ENCODE measurements at regions of chr14 and their contacts with region 1.

Region 1: DNA sequence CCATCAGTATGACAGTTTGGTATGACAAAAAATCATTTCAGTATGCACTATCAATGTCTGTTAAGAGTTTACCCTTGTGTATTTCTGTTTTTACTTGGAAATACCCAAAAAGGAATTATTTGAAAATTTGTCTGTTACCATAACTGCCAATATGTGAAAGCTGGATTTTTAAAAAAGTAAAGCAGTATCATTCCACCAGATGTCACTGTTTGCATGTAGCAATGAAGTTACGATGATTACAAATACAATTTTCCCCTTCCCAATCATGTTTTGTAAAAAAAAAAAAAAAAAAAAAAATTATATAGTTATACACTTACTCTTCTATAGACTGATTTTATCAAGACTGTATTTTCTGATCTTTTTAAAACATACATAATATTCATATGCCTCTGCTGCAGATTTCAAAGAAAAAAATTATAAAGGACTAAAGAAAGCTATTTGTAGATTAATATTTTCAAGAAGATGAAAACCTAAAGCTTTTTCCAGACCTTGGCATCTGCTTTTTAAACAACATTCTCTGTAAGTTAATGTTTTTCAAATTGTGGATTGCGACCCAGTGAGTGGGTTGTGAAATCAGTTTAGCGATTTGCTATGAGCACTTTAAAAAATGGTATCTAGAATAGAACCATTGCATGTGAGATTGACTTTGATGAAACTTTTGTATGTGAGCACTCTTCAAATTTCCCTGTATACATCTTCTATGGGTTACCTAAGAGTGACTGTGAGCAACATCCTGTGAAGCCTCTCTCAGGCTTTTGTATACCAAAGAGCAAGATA is 114.2 kb downstream of the TTC6 start:
- DNase-seq: peak; percentile 16
- H3K4me3 ChIP-seq: no peak overlapping the region
- H3K27ac ChIP-seq: no peak overlapping the region
- H3K4me1 ChIP-seq: no peaks in the 10 kb centered on the region
- H3K27me3 ChIP-seq: peaks cover 6 to 11% of the 10 kb centered on the region in 2 experiments
- CTCF ChIP-seq: peak in 1 of 2 donors; percentile 24
- POLR2A ChIP-seq: no peak

Region 2: DNA sequence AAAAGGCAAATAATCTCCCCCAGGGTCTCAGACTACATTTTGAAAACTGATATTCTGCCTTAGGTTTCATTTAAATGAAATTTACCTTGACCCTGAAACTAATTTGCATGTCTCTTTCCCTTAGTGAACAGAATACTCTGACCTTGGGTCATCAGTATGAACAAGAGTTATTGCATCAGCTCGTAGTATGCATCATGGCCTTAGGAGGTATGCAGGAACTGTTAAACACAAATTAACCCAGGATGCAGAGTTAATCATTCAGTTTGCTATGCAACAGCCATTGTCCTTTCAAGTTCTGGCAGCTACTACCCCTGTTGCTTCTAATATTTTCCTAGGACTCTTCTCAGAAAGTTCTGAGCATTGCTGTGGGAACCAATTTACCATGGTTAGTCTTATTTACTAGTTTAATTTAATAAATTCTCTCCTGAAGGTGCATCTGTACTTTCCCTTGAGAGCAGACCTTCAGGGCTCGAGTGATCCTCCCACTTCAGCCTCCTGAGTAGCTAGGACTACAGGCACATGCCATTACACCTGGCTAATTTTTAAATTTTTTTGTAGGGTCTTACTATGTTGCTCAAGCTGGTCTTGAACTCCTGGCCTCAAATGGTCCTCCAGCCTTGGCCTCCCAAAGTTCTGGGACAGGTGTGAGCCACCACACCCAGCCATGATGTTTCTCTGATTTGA is 12.5 kb after region 1 on chr14:
- CTCF ChIA-PET with region 1: interaction called, 10 read pairs
- POLR2A ChIA-PET with region 1: no interaction called
- dilution Hi-C with region 1: no loop called
- intact Hi-C with region 1: no loop called
- DNase-seq: no peak
- H3K4me3 ChIP-seq: no peak overlapping the region
- H3K27ac ChIP-seq: no peak overlapping the region
- H3K4me1 ChIP-seq: no peaks in the 10 kb centered on the region
- H3K27me3 ChIP-seq: peaks cover 0 to 2% of the 10 kb centered on the region in 2 experiments
- CTCF ChIP-seq: no peak
- POLR2A ChIP-seq: no peak

Region 3: GRCh38 chr14:38208618-38209562 is 499.3 kb after region 1 on chr14:
- CTCF ChIA-PET with region 1: no interaction called
- POLR2A ChIA-PET with region 1: no interaction called
- dilution Hi-C with region 1: no loop called
- intact Hi-C with region 1: no loop called
- DNase-seq: peak; percentile 47
- H3K4me3 ChIP-seq: peak overlapping the region; percentile 34 to 58 (median 44)
- H3K27ac ChIP-seq: no peak overlapping the region
- H3K4me1 ChIP-seq: peaks cover 36% of the 10 kb centered on the region
- H3K27me3 ChIP-seq: no peaks in the 10 kb centered on the region
- CTCF ChIP-seq: peak in 1 of 2 donors; percentile 48
- POLR2A ChIP-seq: no peak

Measured in endothelial cell of umbilical vein (primary cell).